Activated T-helper 2 cell treated with anti-CD3 and anti-CD28 coated beads, Interferon-gamma antibody, Interleukin-2, Interleukin-4, amounts not matched to agents 10 μg/mL and 5 μg/mL and 100 μg/mL, durations not matched to agents 14 hours and 24 hours and 36 hours (primary cell): ENCODE measurements at regions of chr6 and their contacts with region 1.

Region 1: GRCh38 chr6:47309291-47310130 is at the start of gene TNFRSF21:
- DNase-seq: peak; percentile 78
- H3K4me3 Mint-ChIP-seq: peak within 1 kb of the TSS; percentile 62
- H3K27ac Mint-ChIP-seq: no peak within 1 kb of the TSS
- H3K4me1 Mint-ChIP-seq: peaks cover 10% of the 10 kb centered on the region
- H3K27me3 Mint-ChIP-seq: peaks cover 58% of the 10 kb centered on the region
- total RNA-seq, gene TNFRSF21: 2.7 and 2.8 TPM in 2 replicates

Region 2: DNA sequence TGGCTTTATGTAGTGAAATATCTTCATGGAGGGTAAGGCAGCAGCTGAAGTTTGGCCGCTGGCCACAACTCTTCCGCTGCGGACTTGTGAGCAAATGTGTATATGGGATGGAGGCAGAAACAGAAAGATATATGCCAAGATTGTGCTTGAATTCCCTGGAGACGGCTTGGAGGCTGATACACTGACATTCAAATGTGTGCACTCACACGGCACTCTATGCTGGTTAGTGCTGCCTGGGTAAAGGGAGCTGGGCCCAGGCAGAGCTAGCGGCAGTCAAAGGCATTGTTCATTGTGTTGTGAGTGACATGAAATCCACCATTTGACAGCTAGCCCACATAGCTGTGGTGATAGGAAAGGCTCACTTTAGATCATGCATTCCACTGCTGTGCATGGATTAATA is 1496.6 kb before region 1 on chr6:
- intact Hi-C with region 1: no loop called
- DNase-seq: no peak
- H3K4me3 Mint-ChIP-seq: no peak overlapping the region
- H3K27ac Mint-ChIP-seq: peak overlapping the region; percentile 3
- H3K4me1 Mint-ChIP-seq: peaks cover 47% of the 10 kb centered on the region
- H3K27me3 Mint-ChIP-seq: no peaks in the 10 kb centered on the region

Region 3: DNA sequence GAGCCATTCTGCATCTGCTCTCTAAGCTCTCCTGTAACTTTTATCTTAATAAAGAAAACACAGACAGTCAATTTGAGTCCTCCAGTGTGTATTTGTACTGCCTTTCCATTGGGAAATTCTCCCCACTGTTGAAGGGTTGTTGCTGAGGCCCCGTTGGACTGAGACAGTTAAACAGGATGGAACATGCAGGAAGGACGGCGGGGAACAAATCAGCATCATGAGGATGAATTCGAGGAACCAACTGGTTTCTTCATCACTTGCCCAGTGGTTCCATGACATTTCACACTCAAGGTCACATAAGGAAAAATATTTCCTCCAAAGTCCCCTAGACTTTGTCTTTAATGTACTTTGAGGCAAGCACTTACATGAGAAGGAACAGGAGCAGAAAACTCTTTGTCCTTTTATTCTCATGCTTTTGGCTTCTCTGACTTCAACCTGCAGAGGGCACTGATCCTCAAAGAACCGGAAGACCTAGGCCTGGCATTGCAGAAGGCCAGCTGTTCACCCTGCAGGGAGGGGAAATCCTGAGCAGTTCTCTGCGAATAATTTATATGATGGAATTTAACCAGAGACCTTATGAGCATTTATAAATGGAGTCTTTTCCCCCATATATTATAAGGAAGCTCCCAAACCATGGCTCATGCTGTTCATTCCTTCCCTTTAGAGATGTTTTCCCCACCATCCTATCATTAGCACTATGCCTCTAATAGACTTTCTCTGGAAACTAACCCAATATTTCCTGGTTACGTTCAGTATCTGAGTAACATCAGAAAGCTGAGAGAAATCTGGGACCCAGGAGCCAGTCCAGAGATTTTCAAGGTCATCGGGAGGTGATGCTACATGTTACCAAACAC is 212.2 kb before region 1 on chr6:
- intact Hi-C with region 1: loop called (anchors 1 kb)
- DNase-seq: peak; percentile 9
- H3K4me3 Mint-ChIP-seq: no peak overlapping the region
- H3K27ac Mint-ChIP-seq: no peak overlapping the region
- H3K4me1 Mint-ChIP-seq: no peaks in the 10 kb centered on the region
- H3K27me3 Mint-ChIP-seq: peaks cover 4% of the 10 kb centered on the region

Region 4: DNA sequence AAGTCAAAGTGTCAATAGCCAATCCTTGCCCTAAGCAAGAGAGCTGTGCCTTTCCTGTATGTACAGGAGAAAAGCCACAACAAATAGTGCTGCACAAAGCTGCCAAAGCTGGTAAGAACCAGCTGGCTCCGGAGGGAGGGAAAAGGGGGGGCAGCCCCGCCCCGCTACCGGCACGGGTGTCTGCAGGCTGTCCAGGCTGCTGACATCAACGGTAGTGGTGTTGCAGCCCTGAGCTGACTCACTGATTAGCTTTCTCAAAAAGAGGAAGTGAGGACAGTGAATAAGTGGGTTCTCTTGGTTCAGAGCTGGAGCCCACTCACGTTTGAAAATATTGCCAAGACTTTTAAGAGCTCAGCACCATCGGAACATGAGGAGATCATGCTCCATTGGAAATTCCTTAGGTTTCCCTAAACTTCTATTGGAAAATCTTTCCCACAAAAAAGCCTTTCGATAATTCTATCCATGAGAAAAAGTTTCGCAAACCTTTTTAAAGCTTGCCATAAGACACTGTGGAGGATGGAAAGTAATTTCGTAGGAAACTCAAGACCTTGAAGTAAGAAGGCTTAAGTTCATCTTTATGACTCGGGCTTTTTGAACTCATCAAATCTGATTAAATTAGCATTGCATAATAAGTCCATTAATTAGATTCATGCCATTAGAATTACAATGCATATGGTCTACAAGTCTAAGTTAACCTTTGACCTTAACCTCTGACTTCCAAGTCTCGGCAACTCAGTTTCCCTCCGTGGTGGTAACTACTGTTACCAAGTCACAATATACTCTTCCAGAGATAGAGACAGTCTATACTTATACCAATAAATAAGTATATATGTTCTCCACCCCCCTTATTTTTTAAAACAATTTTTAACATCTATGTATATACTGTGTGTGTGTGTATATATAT is 66.8 kb before region 1 on chr6:
- intact Hi-C with region 1: no loop called
- DNase-seq: peak; percentile 57
- H3K4me3 Mint-ChIP-seq: no peak overlapping the region
- H3K27ac Mint-ChIP-seq: no peak overlapping the region
- H3K4me1 Mint-ChIP-seq: peaks cover 11% of the 10 kb centered on the region
- H3K27me3 Mint-ChIP-seq: no peaks in the 10 kb centered on the region

Region 5: GRCh38 chr6:47292944-47293343 is 16.6 kb before region 1 on chr6:
- intact Hi-C with region 1: no loop called
- DNase-seq: no peak
- H3K4me3 Mint-ChIP-seq: no peak overlapping the region
- H3K27ac Mint-ChIP-seq: no peak overlapping the region
- H3K4me1 Mint-ChIP-seq: no peaks in the 10 kb centered on the region
- H3K27me3 Mint-ChIP-seq: peaks cover 4% of the 10 kb centered on the region